AG04450 (cell line): ENCODE measurements at regions of chr17 and their contacts with region 1.

Region 1: GRCh38 chr17:50332196-50332595 is 13.7 kb upstream of the XYLT2 start:
- DNase-seq: no peak
- H3K4me3 ChIP-seq: no peak overlapping the region
- H3K27ac ChIP-seq: no peak overlapping the region
- H3K27me3 ChIP-seq: peaks cover 2% of the 10 kb centered on the region
- CTCF ChIP-seq: no peak

Region 2: GRCh38 chr17:50177983-50178834 is 154.0 kb before region 1 on chr17:
- CTCF ChIA-PET with region 1: interaction called, 11 read pairs
- POLR2A ChIA-PET with region 1: no interaction called
- DNase-seq: peak; percentile 92
- H3K4me3 ChIP-seq: 0 out of 2 replicates have a peak overlapping the region, but pooled peaks have one; percentile 4
- H3K27ac ChIP-seq: peak overlapping the region; percentile 98
- H3K27me3 ChIP-seq: no peaks in the 10 kb centered on the region
- CTCF ChIP-seq: peak; percentile 59

Region 3: GRCh38 chr17:50312308-50312707 is 19.9 kb before region 1 on chr17:
- CTCF ChIA-PET with region 1: no interaction called
- POLR2A ChIA-PET with region 1: no interaction called
- DNase-seq: no peak
- H3K4me3 ChIP-seq: no peak overlapping the region
- H3K27ac ChIP-seq: no peak overlapping the region
- H3K27me3 ChIP-seq: peaks cover 4% of the 10 kb centered on the region
- CTCF ChIP-seq: no peak

Region 4: DNA sequence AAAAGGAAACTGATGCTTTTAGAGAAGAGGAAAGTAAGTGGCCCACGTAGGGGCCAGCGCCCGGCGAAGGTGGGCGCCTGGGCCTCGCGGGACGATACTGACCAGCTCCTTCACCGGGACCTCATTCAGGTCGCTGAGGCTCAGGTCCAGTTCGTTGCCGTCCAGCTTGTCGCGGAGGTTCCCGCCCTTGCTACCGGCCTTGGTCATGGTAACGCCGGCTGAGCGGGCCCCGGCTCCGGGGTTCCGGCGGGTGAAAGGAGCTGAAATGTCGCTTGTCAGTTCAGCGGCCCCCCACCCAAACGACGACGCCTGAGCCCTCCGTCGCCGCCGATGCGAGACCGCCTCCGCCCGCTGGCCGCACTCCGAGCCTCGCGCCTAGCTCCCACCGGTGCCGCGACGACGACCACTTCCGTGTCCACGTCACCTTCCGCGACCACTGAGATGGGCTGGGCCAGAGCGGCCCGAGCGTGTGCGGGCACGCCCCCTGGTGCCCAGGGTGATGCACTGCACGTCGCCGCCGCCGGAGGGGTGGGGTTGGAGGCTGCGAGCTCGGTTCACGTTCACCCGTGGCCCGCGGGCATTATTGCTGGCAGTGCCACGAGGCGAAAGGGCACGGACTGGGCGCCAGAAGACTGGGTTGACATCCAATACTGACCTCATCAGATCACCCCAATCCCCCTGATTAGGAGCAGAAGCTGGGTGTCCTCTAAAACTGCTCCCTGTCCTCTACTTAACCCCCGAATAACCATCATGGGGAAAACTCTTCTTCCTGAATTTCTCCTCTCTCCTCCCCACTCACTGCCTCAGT is 65.1 kb after region 1 on chr17 and contains the start of gene LRRC59:
- CTCF ChIA-PET with region 1: no interaction called
- POLR2A ChIA-PET with region 1: no interaction called
- DNase-seq: peak; percentile 53
- H3K4me3 ChIP-seq: peak within 1 kb of the TSS; percentile 94
- H3K27ac ChIP-seq: peak within 1 kb of the TSS; percentile 91
- H3K27me3 ChIP-seq: no peaks in the 10 kb centered on the region
- CTCF ChIP-seq: peak; percentile 87
- polyA plus RNA-seq, gene LRRC59: 143 and 145 TPM in 2 replicates

Region 5: DNA sequence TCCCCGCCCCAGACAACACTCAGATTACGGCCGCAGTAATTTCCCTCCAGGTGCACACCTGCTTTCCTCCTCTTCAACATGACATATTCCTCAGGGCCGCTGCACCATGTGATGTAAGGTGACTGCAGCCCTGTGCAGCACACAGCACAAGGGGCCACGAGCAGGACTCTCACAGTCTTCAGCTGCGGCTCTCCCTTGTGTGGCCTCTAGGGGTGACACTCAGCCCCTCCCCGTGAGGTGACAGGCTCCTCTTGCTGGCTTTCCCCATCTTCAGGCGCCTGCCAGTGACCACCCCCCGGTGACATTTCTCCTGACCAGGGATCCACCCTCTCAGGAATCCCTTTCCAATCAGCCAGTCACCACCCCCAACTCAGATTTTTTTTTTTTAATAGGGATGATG is 271.1 kb after region 1 on chr17:
- CTCF ChIA-PET with region 1: no interaction called
- POLR2A ChIA-PET with region 1: no interaction called
- DNase-seq: no peak
- H3K4me3 ChIP-seq: no peak overlapping the region
- H3K27ac ChIP-seq: no peak overlapping the region
- H3K27me3 ChIP-seq: peaks cover 31% of the 10 kb centered on the region
- CTCF ChIP-seq: 0 out of 2 replicates have a peak, but pooled peaks have one; percentile 19